Activated CD4-positive, alpha-beta T cell treated with anti-CD3 and anti-CD28 coated beads for 36 hours (primary cell): ENCODE measurements at regions of chr17 and their contacts with region 1.

Region 1: DNA sequence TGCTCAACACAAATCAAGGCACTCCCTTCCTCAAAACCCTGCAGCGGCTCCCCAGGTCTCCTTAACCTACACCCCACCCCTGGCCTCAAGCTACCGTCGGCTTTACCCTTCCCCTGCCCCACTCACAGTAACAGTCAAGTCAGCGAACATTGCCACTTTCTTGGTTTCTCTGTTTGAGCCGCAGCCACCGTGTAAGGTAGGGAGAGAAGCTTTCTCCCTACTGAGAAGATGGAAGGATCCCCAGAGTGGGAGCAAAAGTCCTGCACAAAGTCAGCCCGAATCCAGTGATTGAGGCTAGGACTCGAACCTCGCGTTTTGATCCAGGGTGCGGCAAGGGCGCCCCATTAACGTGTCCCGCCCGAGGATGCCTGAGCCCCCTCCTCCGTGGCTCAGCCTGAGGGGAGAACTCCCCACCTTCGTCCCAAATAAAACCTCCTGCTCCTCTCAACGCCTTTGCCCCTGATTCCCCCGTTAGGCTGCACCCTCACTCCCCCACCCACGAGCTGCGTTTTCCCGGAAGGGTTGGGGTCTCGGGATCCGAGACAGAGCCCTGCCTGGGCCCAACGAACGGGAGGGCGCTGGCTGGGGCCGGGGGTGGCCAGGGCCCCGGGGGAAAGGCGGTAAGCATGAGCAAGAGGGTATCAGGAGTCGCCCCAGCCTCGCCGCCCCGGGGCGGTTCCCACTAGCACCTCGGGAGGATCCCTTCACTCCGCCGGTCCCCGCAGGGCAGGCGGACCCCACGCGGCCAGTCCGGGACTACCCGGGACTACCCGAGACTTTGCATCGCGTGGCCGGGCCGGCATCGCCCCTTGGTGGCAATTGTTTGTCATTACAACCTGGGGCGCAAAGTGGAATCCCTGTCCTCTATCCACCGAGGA is 9.9 kb upstream of the NAGS start:
- DNase-seq: peak; percentile 83
- ATAC-seq: peak; percentile 94
- H3K4me3 Mint-ChIP-seq: no peak overlapping the region
- H3K27ac Mint-ChIP-seq: peak overlapping the region; percentile 19
- H3K4me1 Mint-ChIP-seq: no peaks in the 10 kb centered on the region
- H3K27me3 Mint-ChIP-seq: peaks cover 20% of the 10 kb centered on the region

Region 2: DNA sequence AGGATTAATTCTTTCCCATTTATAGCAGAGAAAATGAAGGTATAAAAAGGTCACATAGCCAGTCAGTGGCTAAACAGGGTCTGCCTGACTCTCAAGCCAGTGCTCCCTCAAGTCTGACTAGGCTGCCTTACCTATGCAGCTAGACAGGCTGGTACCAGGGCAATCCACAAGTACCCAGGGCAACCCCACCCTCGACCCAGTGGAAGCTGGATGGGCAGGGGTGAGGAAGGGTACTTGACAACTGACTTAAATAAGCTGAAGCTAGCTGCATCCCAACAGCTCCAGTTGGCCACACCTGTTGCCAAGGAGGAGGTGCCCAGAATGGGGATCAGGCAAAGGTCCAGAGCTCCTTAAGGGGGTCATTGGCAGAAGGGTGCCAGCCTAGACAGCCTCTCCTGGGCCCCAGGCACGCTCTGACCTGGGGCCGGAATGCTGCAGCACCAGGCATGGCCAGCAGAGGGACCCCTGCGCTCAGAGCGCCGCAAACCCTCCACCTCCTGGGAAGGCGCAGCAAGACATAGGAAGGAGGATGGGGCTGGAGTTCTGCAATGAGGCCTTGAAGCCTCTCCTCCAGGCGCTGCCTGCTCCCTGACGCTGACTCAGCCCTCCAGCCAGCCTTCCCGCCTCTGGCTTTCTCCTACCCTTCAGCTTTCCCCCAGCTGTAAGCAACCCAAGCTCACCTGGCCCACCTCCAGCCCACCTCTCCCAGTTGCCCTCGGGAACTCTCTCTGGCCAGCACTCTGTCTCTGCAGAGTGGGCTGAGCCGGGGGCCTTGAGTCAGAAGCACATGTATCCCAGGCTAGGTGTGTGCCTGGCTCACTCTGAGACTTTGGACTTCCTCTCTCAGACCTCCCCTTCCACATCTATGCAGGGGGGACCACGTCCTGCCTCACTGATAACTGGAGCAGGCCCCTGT is 116.0 kb before region 1 on chr17:
- CTCF ChIA-PET with region 1: interaction called, 8 read pairs
- POLR2A ChIA-PET with region 1: no interaction called
- intact Hi-C with region 1: loop called (anchors 1 to 2 kb)
- DNase-seq: peak; percentile 79
- ATAC-seq: peak; percentile 90
- H3K4me3 Mint-ChIP-seq: no peak overlapping the region
- H3K27ac Mint-ChIP-seq: no peak overlapping the region
- H3K4me1 Mint-ChIP-seq: no peaks in the 10 kb centered on the region
- H3K27me3 Mint-ChIP-seq: no peaks in the 10 kb centered on the region

Region 3: GRCh38 chr17:43907425-43907981 is 87.0 kb before region 1 on chr17 and contains the start of gene MPP2:
- CTCF ChIA-PET with region 1: interaction called, 3 read pairs
- POLR2A ChIA-PET with region 1: no interaction called
- intact Hi-C with region 1: loop called in 1 of 2 experiments (anchors 1 kb)
- DNase-seq: peak; percentile 75
- ATAC-seq: peak; percentile 49
- H3K4me3 Mint-ChIP-seq: peak within 1 kb of the TSS; percentile 34
- H3K27ac Mint-ChIP-seq: no peak within 1 kb of the TSS
- H3K4me1 Mint-ChIP-seq: peaks cover 17% of the 10 kb centered on the region
- H3K27me3 Mint-ChIP-seq: peaks cover 25% of the 10 kb centered on the region
- total RNA-seq, gene MPP2: 1.2 to 1.3 TPM

Region 4: GRCh38 chr17:43946069-43946696 is 48.3 kb before region 1 on chr17:
- CTCF ChIA-PET with region 1: interaction called, 59 read pairs
- POLR2A ChIA-PET with region 1: no interaction called
- intact Hi-C with region 1: loop called (anchors 1 kb)
- DNase-seq: peak; percentile 33
- ATAC-seq: no peak
- H3K4me3 Mint-ChIP-seq: no peak overlapping the region
- H3K27ac Mint-ChIP-seq: no peak overlapping the region
- H3K4me1 Mint-ChIP-seq: peaks cover 6% of the 10 kb centered on the region
- H3K27me3 Mint-ChIP-seq: peaks cover 13% of the 10 kb centered on the region

Region 5: DNA sequence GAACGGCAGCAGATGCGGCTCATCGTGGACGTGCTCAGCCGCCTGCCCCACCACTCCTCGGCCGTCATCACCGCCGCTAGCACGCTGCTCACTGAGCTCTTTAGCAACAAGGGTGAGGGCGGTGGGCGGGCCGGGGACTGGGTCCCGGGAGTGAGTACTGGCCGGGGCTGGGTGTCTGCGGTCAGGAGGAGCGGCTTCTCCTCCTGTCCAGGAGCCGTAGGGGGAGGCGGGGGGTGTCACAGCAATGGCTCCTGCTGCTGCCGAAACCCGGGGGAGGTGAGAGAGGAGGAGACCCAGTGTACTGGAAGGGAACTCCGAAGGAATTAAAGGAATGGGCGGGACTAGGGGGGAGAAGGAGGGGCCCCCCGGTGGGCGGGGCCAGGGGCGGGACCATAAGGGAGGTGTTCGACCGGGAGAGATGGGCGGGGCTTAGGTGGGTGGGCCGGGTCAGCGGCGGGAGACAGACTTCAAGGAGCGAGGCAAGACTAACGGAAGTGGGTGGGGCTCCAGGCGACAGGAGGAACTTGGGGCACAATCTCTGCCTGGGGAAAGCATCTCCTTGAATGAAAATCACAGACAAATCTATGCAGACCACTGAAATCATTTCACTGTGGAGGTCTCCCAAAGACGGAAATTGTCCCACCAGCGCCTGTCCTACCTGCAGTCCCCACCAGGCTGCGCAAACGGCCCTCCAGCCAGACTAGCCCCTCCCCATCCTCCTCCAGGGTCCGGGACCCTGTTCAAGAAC is 12.3 kb after region 1 on chr17:
- CTCF ChIA-PET with region 1: interaction called, 10 read pairs
- POLR2A ChIA-PET with region 1: no interaction called
- intact Hi-C with region 1: no loop called
- DNase-seq: peak; percentile 99
- ATAC-seq: peak; percentile 84
- H3K4me3 Mint-ChIP-seq: peak overlapping the region; percentile 78
- H3K27ac Mint-ChIP-seq: peak overlapping the region; percentile 86
- H3K4me1 Mint-ChIP-seq: peaks cover 20% of the 10 kb centered on the region
- H3K27me3 Mint-ChIP-seq: peaks cover 17% of the 10 kb centered on the region